ENCODE measurements at regions of chr7 and their contacts with region 1.

Region 1: DNA sequence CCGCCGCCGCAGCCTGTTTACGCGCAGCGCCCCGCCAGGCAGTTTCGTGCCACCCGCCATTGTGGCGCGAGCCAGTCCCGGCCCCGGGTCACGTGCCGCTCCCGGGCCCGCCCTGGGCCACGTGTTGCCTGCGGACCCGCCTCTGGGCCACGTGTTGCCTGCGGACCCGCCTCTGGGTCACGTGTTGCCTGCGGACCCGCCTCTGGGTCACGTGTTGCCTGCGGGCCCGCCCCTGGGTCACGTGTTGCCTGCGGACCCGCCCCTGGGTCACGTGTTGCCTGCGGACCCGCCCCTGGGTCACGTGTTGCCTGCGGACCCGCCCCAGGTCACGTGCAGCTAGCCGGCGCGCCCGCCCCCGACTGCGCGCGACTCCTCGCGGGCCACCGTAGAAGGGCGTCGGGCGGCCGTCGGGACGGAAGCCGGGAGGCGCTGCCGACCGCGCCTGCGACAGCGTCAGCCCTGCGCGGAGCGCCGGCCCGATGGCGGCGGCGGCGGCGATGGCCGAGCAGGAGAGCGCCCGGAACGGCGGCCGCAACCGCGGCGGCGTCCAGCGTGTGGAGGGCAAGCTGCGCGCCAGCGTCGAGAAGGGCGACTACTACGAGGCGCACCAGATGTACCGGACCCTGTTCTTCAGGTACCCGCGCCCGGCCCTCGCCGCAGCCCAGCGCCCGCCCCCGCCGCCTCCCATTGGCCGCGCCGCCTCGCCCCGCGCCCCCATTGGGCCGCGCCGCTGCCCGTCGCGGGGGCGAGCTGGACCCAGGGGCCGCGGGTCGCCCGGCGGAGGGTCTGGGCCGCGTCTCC is at the start of gene GET4:
- DNase-seq: peak; percentile 98
- ATAC-seq: peak; percentile 87
- H3K4me3 Mint-ChIP-seq: peak within 1 kb of the TSS; percentile 98
- H3K27ac Mint-ChIP-seq: peak within 1 kb of the TSS; percentile 95
- H3K4me1 Mint-ChIP-seq: peaks cover 26% of the 10 kb centered on the region
- H3K27me3 Mint-ChIP-seq: no peaks in the 10 kb centered on the region
- total RNA-seq, gene GET4: 38.0 to 39.2 TPM

Region 2: DNA sequence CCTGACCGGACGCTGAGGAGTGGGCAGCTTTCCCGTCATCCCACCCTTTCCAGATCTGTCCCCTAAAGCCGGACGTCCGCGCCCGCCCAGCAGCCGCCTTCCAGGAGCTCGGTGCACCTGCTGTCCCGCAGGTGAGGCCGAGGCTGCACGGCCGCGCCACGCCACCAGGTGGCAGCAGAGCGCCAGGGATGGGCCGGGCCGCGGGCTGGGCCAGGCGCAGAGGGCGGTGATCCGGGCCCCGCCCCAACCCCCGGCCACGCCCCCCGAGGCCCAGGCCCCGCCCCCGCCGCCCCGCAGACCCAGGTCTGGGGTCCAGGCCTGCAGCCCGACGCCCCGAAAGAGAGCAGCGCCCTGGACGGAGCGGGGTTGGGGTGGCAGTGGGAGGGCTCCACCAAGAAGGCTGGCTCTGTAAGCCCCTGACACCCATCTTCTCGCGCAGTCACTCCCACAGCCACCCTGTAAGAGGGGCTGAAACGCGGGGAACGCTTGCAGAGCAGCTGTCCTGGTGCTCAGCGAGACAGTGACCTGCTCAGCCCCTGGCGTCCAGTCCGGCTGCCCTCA is 554.2 kb before region 1 on chr7:
- CTCF ChIA-PET with region 1: interaction called, 10 read pairs
- DNase-seq: peak; percentile 81
- ATAC-seq: peak; percentile 94
- H3K4me3 Mint-ChIP-seq: no peak overlapping the region
- H3K27ac Mint-ChIP-seq: no peak overlapping the region
- H3K4me1 Mint-ChIP-seq: peaks cover 4% of the 10 kb centered on the region
- H3K27me3 Mint-ChIP-seq: peaks cover 12% of the 10 kb centered on the region

Region 3: DNA sequence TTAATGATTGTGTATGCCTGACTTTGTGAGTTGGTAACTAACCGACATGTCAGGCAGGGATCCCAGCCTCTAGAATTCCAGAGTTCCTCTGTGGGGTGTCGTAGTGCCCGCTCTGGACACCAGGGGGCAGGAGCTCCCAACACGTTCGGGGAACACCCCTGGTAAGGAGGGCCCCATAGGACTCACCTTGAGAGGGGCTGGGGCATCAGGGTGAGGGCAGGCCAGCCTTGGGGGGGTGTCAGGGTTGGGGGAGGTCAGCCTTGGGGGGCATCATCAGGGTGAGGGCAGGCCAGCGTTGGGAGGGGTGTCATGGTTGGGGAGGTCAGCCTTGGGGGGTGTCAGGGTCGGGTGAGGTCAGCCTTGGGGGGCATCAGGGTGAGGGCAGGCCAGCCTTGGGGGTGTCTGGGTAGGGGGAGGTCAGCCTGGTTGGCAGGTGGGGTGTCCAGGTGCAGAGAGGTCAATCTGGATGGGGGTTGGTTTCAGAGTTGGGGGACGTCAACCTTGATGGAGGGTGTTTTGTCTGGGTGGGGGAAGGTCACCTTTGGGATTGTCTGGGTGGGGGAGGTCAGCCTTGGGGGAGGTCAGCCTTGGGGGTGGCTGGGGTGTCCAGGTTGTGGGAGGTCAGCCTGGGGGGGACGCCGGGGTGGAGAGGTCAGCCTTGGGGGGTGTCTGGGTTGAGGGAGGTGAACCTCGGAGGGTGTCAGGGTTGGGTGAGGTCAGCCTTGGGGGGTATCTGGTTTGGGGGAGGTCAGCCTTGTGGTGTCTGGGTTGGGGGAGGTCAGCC is 89.7 kb before region 1 on chr7:
- CTCF ChIA-PET with region 1: interaction called, 37 read pairs
- DNase-seq: peak; percentile 69
- ATAC-seq: peak; percentile 80
- H3K4me3 Mint-ChIP-seq: no peak overlapping the region
- H3K27ac Mint-ChIP-seq: no peak overlapping the region
- H3K4me1 Mint-ChIP-seq: peaks cover 2% of the 10 kb centered on the region
- H3K27me3 Mint-ChIP-seq: no peaks in the 10 kb centered on the region

Region 4: DNA sequence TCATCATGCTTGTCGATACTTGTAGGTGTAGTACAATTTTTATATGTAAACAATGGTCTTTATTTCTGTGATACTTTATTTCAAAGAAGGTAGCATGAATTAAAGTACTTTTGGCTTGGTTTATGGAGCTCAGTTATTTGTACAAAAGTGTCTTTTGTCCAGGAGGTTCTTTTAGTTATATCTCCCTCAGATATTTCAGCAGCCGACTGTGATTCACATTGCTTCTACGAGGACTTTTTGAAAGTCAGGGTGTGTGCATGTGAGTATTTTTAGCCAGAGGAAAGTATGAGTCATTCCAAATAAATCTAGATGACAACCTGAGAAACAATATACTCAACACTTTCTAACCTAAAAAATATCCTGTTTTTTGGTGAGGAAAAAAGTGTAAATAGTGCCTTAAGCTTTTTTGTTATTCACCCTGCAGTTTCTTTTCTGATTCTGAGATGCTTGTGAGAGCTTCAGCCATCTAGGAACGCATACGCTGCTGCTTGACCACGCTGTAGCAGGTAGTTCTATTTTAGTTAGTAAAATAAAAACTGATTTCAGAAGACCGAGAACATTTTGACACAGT is 44.7 kb before region 1 on chr7:
- CTCF ChIA-PET with region 1: interaction called, 12 read pairs
- DNase-seq: no peak
- ATAC-seq: peak; percentile 61
- H3K4me3 Mint-ChIP-seq: peak overlapping the region; percentile 59
- H3K27ac Mint-ChIP-seq: peak overlapping the region; percentile 85
- H3K4me1 Mint-ChIP-seq: peaks cover 29% of the 10 kb centered on the region
- H3K27me3 Mint-ChIP-seq: no peaks in the 10 kb centered on the region

Region 5: GRCh38 chr7:901381-902154 is 25.2 kb after region 1 on chr7:
- CTCF ChIA-PET with region 1: no interaction called
- DNase-seq: peak; percentile 66
- ATAC-seq: peak; percentile 51
- H3K4me3 Mint-ChIP-seq: no peak overlapping the region
- H3K27ac Mint-ChIP-seq: no peak overlapping the region
- H3K4me1 Mint-ChIP-seq: no peaks in the 10 kb centered on the region
- H3K27me3 Mint-ChIP-seq: no peaks in the 10 kb centered on the region

Measured in activated CD8-positive, alpha-beta memory T cell treated with anti-CD3 and anti-CD28 coated beads, Interleukin-2, amount 10 ng/mL, durations not matched to agents 7 days and 5 days (primary cell).